ENCODE measurements at regions of chr7 and their contacts with region 1.

Region 1: GRCh38 chr7:157432957-157433576 is 96.3 kb downstream of the DNAJB6 start:
- DNase-seq: no peak
- ATAC-seq: peak; percentile 62

Region 2: GRCh38 chr7:157412021-157412443 is 21.0 kb before region 1 on chr7:
- intact Hi-C with region 1: no loop called
- DNase-seq: no peak
- ATAC-seq: no peak

Region 3: GRCh38 chr7:157875230-157876179 is 442.4 kb after region 1 on chr7:
- intact Hi-C with region 1: loop called (anchors 5 kb)
- DNase-seq: no peak
- ATAC-seq: peak; percentile 55

Region 4: DNA sequence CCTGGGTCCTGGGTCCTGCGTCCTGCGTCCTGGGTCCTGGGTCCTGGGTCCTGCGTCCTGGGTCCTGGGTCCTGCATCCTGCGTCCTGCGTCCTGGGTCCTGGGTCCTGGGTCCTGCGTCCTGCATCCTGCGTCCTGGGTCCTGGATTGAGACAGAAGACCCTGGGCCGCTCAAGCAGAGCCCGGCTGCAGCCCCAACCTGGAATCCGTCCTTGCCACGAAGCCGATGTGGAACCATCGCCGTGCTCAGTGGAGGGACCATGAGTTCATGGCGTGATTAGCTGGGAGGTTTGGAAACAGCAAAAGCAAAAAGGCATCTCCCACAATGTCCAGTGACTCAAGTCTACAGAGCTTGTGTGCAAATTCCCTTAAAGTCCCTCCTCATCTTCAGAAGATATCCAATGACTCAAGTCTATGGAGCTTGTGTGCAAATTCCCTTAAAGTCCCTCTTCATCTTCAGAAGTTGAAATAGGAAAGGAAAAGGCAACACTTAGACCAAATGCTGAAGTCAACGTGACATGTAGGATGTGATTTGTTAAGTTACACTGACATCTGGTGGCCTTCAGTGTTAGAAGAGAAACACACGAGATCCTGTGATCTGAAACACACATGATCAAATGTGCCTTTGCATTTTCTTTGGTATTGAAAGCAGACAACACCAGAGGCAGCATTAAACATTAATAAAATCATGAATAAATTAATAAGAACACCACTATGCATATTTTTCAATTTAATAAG is 974.7 kb after region 1 on chr7:
- intact Hi-C with region 1: loop called (anchors 5 kb)
- DNase-seq: no peak
- ATAC-seq: no peak